Activated CD4-positive, alpha-beta T cell treated with anti-CD3 and anti-CD28 coated beads, Interleukin-2, amount 10 ng/mL, durations not matched to agents 24 days and 14 days (primary cell): ENCODE measurements at regions of chr1 and their contacts with region 1.

Region 1: DNA sequence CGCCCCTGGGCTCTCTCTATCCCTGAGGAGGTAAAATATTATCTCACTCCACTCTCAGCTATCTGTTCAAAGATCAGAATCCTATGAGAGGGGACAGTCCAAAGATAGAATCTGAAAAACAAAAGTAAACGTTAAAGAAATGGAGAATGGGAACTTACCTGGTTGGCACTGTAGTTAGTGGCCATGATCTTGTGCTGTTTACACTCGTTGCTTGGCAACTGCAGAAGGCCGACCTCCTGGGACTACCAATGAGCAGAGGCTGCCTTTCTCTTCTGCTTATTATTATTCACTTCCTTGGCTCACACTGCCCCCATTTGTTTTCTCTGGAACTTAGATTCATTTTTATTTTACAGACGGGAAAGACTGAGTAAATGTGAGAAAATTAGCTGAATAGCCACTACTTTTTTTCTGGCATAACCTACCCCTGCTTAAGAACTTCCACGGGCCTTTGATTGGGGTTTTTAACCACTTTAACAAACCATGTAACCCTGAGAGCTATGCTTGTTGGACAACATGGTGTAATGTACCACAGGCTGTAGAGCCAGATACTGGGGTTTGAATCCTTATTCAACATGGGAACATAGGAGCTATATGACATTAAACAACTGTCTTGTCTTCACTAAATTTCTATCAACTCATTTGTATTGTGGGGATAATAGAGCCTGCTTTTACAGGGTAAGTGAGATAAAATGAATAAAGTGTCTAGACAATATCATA is at the start of gene CFAP126:
- DNase-seq: peak; percentile 77
- H3K4me3 Mint-ChIP-seq: no peak within 1 kb of the TSS
- H3K27ac Mint-ChIP-seq: peak within 1 kb of the TSS; percentile 2
- H3K4me1 Mint-ChIP-seq: peaks cover 13% of the 10 kb centered on the region
- H3K27me3 Mint-ChIP-seq: no peaks in the 10 kb centered on the region
- total RNA-seq, gene CFAP126: not detected in 2 replicates

Region 2: DNA sequence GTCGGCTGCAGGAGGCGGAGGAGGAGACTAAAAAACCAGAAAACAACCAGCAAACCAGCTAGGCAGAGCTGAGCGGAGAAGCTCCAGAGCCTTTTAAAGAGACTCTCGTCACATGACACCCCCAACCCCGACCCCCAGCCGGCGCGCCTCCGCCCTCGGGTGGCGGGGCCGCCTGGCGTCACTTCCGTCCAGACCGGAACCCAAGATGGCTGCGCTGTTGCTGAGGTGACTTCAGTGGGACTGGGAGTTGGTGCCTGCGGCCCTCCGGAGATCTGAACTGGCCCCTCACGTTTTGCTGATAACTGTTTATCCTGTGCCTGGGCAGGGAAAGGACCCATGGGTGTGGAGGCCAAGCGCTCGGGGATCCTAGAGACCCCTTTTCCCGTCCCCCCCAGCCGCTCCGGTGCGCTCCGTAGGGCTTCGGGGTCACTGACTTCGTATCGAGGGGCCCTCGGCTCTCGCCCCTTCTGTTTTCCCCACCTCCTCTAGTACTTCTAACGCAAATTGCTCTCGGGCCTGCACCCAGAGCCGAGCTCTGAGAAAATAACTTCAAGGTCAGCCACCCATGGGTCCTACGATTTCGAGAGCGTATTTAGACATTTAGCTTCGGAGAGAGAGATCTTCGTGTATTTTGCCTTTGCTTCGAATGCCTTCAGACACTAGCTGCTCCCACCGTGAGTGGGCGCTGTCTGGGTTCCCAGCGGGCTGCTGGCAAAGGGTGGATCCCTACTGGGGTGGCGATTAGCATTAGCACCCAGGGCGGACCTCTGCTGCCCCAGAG is 53.5 kb before region 1 on chr1 and contains the start of gene SDHC:
- intact Hi-C with region 1: loop called (anchors 10 kb)
- DNase-seq: peak; percentile 97
- H3K4me3 Mint-ChIP-seq: peak within 1 kb of the TSS; percentile 97
- H3K27ac Mint-ChIP-seq: peak within 1 kb of the TSS; percentile 97
- H3K4me1 Mint-ChIP-seq: peaks cover 21% of the 10 kb centered on the region
- H3K27me3 Mint-ChIP-seq: no peaks in the 10 kb centered on the region
- total RNA-seq, gene SDHC: 174 and 182 TPM in 2 replicates

Region 3: GRCh38 chr1:161402446-161402845 is 34.6 kb after region 1 on chr1:
- intact Hi-C with region 1: no loop called
- DNase-seq: no peak
- H3K4me3 Mint-ChIP-seq: no peak overlapping the region
- H3K27ac Mint-ChIP-seq: no peak overlapping the region
- H3K4me1 Mint-ChIP-seq: peaks cover 28% of the 10 kb centered on the region
- H3K27me3 Mint-ChIP-seq: peaks cover 3% of the 10 kb centered on the region